Common myeloid progenitor, CD34-positive (primary cell): ENCODE measurements at regions of chr11 and their contacts with region 1.

Region 1: GRCh38 chr11:74449369-74449931 is 17.9 kb downstream of the KCNE3 start:
- DNase-seq: peak; percentile 75 to 87 (median 81)
- H3K4me3 ChIP-seq: peak overlapping the region in 2 of 7 experiments; percentile 6 to 25
- H3K27ac ChIP-seq: no peak overlapping the region
- H3K4me1 ChIP-seq: peaks cover 0 to 5% (median 1%) of the 10 kb centered on the region in 4 experiments
- H3K27me3 ChIP-seq: no peaks in the 10 kb centered on the region

Region 2: GRCh38 chr11:74212533-74212932 is 236.9 kb before region 1 on chr11:
- CTCF ChIA-PET with region 1: no interaction called
- POLR2A ChIA-PET with region 1: no interaction called
- DNase-seq: no peak
- H3K4me3 ChIP-seq: no peak overlapping the region
- H3K27ac ChIP-seq: no peak overlapping the region
- H3K4me1 ChIP-seq: no peaks in the 10 kb centered on the region
- H3K27me3 ChIP-seq: no peaks in the 10 kb centered on the region

Region 3: DNA sequence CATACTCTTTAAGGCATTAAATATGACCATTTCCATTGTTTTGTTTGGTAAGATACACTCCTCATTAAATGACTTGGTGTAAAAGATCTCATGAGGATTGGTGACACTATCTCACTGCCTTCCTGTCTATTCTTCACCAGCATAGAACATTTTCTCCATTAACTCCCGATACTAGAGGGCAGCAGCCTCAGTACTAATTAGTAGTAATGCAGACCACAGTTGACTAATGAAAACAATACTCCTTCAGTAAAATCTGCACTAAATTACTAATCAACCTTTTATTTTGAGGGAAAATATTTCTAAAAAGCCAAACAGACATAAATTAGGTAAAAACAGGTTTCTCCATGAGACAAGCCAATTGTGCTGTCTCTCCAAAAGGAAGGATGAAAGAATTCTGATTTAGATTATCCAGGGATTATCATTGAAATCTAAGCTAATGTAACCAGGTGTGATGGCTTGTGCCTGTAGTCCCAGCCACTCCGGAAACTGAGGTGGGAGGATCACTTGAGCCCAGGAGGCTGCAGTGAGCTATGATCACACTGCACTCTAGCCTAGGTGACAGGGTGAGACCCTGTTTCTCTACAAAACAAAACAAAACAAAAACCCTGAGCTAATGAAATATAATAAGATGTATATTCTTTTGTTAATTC is 60.6 kb before region 1 on chr11:
- CTCF ChIA-PET with region 1: interaction called, 117 read pairs
- POLR2A ChIA-PET with region 1: no interaction called
- DNase-seq: peak; percentile 60 to 81 (median 62)
- H3K4me3 ChIP-seq: no peak overlapping the region
- H3K27ac ChIP-seq: no peak overlapping the region
- H3K4me1 ChIP-seq: peaks cover 0 to 4% (median 2%) of the 10 kb centered on the region in 4 experiments
- H3K27me3 ChIP-seq: no peaks in the 10 kb centered on the region

Region 4: DNA sequence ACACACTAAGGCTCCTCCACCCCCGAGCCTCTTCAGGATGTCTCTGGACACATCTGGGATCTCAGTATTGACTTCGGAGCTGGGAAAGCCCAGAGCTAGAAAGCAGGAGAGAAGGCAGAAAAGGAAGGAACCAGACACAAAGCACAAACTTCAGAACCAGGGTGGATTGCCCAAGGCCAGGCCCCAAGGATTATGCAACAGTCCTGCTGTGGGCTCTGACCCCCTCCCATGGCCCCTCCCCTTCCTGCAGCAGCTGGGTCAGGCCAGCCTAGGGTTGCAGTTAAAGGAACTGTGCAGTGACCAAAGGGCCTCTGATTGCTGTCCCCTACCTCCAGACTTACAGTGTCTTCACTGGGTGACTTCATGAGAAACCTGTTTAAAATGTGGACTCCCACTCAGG is 12.6 kb after region 1 on chr11:
- CTCF ChIA-PET with region 1: interaction called, 58 read pairs
- POLR2A ChIA-PET with region 1: no interaction called
- DNase-seq: peak in 1 of 3 donors; percentile 41
- H3K4me3 ChIP-seq: peak overlapping the region in 6 of 7 experiments; percentile 26 to 67 (median 56)
- H3K27ac ChIP-seq: peak overlapping the region; percentile 16 to 49
- H3K4me1 ChIP-seq: peaks cover 13 to 55% (median 36%) of the 10 kb centered on the region in 4 experiments
- H3K27me3 ChIP-seq: peaks cover 0 to 2% (median 0%) of the 10 kb centered on the region in 5 experiments

Region 5: GRCh38 chr11:74520927-74521665 is 71.6 kb after region 1 on chr11:
- CTCF ChIA-PET with region 1: no interaction called
- POLR2A ChIA-PET with region 1: no interaction called
- DNase-seq: no peak
- H3K4me3 ChIP-seq: no peak overlapping the region
- H3K27ac ChIP-seq: no peak overlapping the region
- H3K4me1 ChIP-seq: no peaks in the 10 kb centered on the region
- H3K27me3 ChIP-seq: no peaks in the 10 kb centered on the region

Region 6: GRCh38 chr11:74570266-74571061 is 121.0 kb after region 1 on chr11:
- CTCF ChIA-PET with region 1: interaction called, 242 read pairs
- POLR2A ChIA-PET with region 1: no interaction called
- DNase-seq: peak; percentile 59 to 70 (median 64)
- H3K4me3 ChIP-seq: no peak overlapping the region
- H3K27ac ChIP-seq: no peak overlapping the region
- H3K4me1 ChIP-seq: no peaks in the 10 kb centered on the region
- H3K27me3 ChIP-seq: peaks cover 0 to 2% (median 0%) of the 10 kb centered on the region in 5 experiments

Region 7: DNA sequence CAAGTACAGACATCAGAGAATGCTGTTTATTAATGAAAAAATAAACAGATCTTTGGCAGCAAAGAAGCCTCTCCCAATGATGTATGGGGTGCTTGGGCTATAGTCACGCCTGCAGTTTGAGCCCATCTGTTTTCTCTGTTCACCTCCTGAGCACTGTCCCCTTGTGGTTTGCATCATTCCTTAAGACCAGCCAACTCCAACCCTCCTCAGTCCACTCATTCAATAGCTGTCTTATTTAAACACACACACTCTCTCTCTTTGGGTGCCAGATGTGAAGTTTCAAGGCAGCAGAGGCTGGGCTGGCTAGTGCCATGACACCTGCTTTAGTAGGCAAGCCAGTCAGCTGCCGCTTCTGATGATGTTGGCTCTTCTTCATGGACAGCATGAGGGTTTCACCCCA is 201.0 kb after region 1 on chr11:
- CTCF ChIA-PET with region 1: no interaction called
- POLR2A ChIA-PET with region 1: no interaction called
- DNase-seq: no peak
- H3K4me3 ChIP-seq: no peak overlapping the region
- H3K27ac ChIP-seq: no peak overlapping the region
- H3K4me1 ChIP-seq: no peaks in the 10 kb centered on the region
- H3K27me3 ChIP-seq: no peaks in the 10 kb centered on the region